GM10248 (cell line): ENCODE measurements at regions of chr18 and their contacts with region 1.

Region 1: GRCh38 chr18:32552421-32553030 is 81.8 kb upstream of the GAREM1 start:
- DNase-seq: peak; percentile 73
- CTCF ChIP-seq: peak; percentile 80

Region 2: DNA sequence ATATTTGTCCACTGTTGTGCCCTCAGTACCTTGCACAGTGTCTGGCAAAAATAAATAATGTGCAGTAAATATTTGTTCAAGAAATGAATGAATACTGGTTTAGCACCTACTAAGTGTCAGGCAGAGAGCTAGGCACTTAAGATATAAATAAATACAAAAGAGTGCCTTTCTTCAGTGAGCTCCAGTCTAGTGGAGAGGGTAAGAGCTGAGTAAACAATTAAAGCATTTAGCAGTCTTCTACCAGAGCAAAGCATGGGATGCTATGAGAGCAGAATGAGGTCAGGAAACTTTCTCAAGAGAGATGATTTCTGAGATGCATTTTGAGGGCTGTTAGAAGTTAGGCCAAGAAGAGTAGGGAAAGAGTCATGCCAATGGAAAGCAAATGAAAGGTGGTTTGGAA is 1824.7 kb before region 1 on chr18:
- CTCF ChIA-PET with region 1: no interaction called
- POLR2A ChIA-PET with region 1: no interaction called
- DNase-seq: no peak
- CTCF ChIP-seq: no peak

Region 3: GRCh38 chr18:32158108-32158624 is 394.4 kb before region 1 on chr18:
- CTCF ChIA-PET with region 1: interaction called, 98 read pairs
- POLR2A ChIA-PET with region 1: no interaction called
- DNase-seq: peak; percentile 77
- CTCF ChIP-seq: peak; percentile 88

Region 4: GRCh38 chr18:32271672-32272208 is 280.8 kb before region 1 on chr18:
- CTCF ChIA-PET with region 1: interaction called, 38 read pairs
- POLR2A ChIA-PET with region 1: no interaction called
- DNase-seq: peak; percentile 63
- CTCF ChIP-seq: peak; percentile 67

Region 5: DNA sequence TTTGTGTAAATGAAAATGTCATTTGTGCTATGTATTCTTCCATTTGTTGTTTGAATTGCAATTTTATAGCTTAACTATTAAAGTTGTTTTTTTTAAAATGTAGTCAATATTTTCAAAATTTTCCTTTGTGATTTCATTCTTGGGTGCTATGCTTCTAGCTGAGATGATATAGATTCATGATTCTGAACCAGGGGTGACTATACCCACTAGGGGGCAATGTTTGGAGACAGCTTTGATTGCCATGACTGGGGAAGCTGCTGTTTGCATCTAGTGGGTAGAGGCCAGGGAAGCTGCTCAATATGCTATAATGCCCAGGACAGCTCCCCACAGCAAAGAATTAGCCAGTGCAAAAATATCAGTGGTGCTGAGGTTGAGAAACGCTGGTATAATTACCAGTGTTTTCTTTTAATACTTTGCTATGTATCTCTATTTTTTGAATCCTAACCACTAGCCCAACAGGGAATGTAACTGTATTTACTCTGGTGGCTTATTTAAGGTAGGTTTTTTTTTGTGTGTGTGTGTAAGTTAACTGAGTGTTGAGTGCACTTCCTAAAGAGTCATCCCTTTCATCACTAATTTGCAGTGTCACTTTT is 262.9 kb before region 1 on chr18:
- CTCF ChIA-PET with region 1: interaction called, 11 read pairs
- POLR2A ChIA-PET with region 1: no interaction called
- DNase-seq: peak; percentile 41
- CTCF ChIP-seq: peak; percentile 54

Region 6: DNA sequence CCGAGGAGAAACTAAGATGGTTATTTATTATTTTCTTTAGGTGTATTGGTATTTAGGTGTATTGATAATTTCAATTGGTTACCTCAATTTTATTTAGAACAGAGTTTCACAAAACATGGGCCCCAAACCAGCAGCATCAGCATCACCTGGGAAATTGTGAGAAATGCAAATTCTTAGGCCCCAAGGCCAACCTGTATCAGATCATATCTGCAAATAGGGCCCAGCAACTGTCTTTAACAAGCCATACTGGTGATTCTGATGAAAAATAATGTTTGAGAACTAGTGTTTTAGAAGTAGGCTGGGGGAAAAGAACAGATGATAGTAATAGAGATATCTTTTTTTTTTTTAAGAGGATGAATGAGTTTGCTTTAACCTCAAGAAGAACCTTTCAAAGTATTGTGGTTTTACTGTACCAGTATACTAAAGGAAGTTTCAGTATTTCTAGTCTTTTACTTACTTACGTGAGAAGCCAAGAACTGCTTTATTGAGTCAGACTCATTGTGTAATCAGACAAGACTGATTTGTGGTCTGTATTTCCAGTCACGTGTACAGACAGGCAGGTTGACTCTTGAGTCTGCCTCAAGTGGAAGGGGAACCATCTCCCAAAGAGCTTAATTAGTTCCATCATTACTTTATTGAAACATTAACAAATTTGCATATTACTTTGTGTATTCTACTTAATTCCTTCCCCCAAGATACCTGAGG is 21.4 kb before region 1 on chr18:
- CTCF ChIA-PET with region 1: interaction called, 10 read pairs
- POLR2A ChIA-PET with region 1: no interaction called
- DNase-seq: no peak
- CTCF ChIP-seq: no peak

Region 7: DNA sequence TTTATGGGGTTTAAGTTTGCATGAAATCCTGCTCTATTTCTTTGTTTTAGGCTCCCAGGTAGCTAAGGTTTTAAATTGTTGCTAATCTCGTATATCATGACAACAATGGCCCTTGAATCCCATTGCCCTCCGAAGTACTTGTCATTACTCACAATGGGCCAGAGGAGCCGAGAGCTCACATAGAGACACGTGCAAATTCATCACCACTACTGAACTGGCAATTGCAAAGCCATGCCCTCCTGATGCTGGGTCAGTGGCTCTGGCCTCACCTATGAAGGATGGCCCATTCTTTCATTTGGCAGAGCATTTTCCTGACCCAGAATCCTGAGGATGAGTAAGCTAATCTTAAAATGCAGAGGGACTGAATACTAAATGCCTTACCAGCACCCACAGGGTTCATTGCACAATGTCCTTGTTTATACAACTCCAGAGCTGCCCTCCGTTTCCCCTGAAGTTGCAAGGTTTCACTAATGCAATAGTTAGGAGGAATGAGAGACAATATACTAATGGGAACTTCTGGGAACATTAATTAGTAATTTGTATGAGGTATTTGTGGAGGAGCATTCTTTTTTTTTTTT is 10.2 kb before region 1 on chr18:
- CTCF ChIA-PET with region 1: interaction called, 18 read pairs
- POLR2A ChIA-PET with region 1: no interaction called
- DNase-seq: no peak
- CTCF ChIP-seq: no peak

Region 8: GRCh38 chr18:32566960-32567359 is 14.4 kb after region 1 on chr18:
- CTCF ChIA-PET with region 1: interaction called, 14 read pairs
- POLR2A ChIA-PET with region 1: no interaction called
- DNase-seq: no peak
- CTCF ChIP-seq: no peak